ENCODE measurements at regions of chr1 and their contacts with region 1.

Region 1: GRCh38 chr1:111222308-111223125 is 5.0 kb upstream of the CHI3L2 start:
- DNase-seq: peak; percentile 94
- H3K4me3 ChIP-seq: peak overlapping the region in 3 of 8 donors; percentile 3 to 55 (median 15)
- H3K27ac ChIP-seq: peak overlapping the region; percentile 63 to 88 (median 84)
- H3K4me1 ChIP-seq: peaks cover 49 to 100% (median 89%) of the 10 kb centered on the region in 6 donors
- H3K27me3 ChIP-seq: no peaks in the 10 kb centered on the region
- CTCF ChIP-seq: peak; percentile 59 to 94 (median 91)
- POLR2A ChIP-seq: no peak

Region 2: DNA sequence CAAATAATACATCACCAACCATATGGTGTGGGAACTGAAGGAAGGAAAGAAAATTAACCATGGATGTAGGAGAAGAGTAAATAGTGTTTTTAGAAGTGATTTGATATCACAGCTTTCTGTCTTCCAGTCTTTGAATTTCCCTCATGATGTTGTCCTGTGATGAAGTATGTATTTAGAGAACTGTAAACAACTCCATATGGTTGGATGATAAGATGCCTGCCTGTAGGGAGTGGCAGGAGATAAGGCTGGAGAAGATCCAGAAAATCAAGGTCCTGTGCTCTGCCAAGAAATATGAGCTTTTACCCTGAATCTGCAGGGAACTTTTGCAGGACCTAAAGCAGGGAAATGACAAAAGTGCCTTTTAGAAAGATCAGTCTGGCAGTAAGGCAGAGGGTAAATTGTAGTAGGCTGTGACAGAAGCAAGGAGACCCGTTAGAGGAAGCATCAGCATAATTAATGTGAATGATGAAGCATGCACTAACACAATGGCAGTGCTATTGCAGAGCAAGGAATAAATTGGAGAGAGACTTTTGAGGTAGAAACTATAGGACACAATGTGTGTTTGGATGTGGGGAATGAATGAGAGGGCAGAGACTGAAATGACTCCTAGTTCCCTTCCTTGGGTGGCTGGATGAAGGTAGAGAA is 60.6 kb before region 1 on chr1:
- intact Hi-C with region 1: no loop called
- DNase-seq: no peak
- H3K4me3 ChIP-seq: no peak overlapping the region
- H3K27ac ChIP-seq: peak overlapping the region in 6 of 8 donors; percentile 7 to 54 (median 44)
- H3K4me1 ChIP-seq: peaks cover 12 to 74% (median 51%) of the 10 kb centered on the region in 6 donors
- H3K27me3 ChIP-seq: no peaks in the 10 kb centered on the region
- CTCF ChIP-seq: no peak
- POLR2A ChIP-seq: no peak

Region 3: GRCh38 chr1:111174070-111174469 is 48.4 kb before region 1 on chr1:
- intact Hi-C with region 1: no loop called
- DNase-seq: no peak
- H3K4me3 ChIP-seq: no peak overlapping the region
- H3K27ac ChIP-seq: no peak overlapping the region
- H3K4me1 ChIP-seq: peaks cover 0 to 77% (median 23%) of the 10 kb centered on the region in 6 donors
- H3K27me3 ChIP-seq: no peaks in the 10 kb centered on the region
- CTCF ChIP-seq: no peak
- POLR2A ChIP-seq: no peak

Region 4: GRCh38 chr1:111334169-111334568 is 111.7 kb after region 1 on chr1:
- intact Hi-C with region 1: loop called (anchors 10 kb)
- DNase-seq: peak; percentile 71
- H3K4me3 ChIP-seq: no peak overlapping the region
- H3K27ac ChIP-seq: no peak overlapping the region
- H3K4me1 ChIP-seq: peaks cover 0 to 6% (median 0%) of the 10 kb centered on the region in 6 donors
- H3K27me3 ChIP-seq: no peaks in the 10 kb centered on the region
- CTCF ChIP-seq: peak; percentile 30 to 83 (median 61)
- POLR2A ChIP-seq: no peak